Posterior vena cava (tissue), 2 donors: ENCODE measurements at regions of chr7 and their contacts with region 1.

Region 1: DNA sequence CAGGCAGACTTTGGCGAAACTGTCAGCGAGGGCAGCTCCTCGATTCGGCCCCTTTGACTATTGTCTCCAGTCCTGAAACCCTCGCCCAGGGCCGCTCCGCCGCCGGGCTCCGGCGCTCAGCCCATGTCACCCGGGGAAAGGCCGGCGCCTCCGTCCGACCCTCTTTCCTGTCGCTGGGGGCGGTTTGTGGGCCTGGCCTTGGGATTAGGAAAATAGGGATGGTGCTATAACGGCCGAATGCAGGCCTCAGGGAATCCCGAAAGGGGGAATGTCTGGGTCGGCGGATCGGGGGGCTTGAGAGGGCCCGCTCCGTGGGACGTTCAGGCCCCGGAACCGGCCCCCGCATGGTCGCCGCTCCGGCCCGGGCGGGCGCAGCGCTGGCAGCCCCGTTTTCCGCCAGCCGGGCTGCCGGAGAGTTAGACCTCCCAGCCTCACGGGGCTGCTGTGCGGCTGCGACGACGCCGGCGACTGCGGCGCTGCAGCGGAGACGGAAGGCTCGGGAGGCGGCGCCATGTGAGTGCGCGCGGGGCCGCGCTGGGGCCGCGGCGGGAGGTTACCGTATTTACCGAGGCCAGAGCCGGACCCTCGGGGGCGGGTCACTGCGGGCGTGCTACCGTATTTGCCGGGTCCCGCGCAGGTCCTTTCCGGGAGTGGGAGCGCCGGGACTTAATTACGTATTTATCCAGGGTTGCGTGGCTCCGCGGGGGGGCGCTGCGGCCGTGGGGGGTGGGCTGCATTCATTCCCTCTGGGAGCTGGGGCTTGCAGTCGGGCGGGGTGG is 25.9 kb downstream of the ZNF775 start:
- DNase-seq: peak; percentile 97

Region 2: GRCh38 chr7:150370612-150371071 is 34.4 kb before region 1 on chr7:
- intact Hi-C with region 1: loop called in 1 of 2 experiments (anchors 5 kb)
- DNase-seq: no peak